ENCODE measurements at regions of chr20 and their contacts with region 1.

Region 1: GRCh38 chr20:17806739-17807441 is 107.1 kb downstream of the BANF2 start:
- DNase-seq: peak in 1 of 2 experiments; percentile 64
- H3K4me3 ChIP-seq: no peak overlapping the region
- H3K27ac ChIP-seq: no peak overlapping the region
- H3K4me1 ChIP-seq: peaks cover 0 to 6% (median 4%) of the 10 kb centered on the region in 4 experiments; a peak in 4 of 7 replicates
- H3K27me3 ChIP-seq: no peaks in the 10 kb centered on the region
- CTCF ChIP-seq: no peak
- EP300 ChIP-seq: no peak
- POLR2A ChIP-seq: no peak
- RAD21 ChIP-seq: peak in 1 of 2 experiments; percentile 17; a peak in 1 of 4 replicates

Region 2: DNA sequence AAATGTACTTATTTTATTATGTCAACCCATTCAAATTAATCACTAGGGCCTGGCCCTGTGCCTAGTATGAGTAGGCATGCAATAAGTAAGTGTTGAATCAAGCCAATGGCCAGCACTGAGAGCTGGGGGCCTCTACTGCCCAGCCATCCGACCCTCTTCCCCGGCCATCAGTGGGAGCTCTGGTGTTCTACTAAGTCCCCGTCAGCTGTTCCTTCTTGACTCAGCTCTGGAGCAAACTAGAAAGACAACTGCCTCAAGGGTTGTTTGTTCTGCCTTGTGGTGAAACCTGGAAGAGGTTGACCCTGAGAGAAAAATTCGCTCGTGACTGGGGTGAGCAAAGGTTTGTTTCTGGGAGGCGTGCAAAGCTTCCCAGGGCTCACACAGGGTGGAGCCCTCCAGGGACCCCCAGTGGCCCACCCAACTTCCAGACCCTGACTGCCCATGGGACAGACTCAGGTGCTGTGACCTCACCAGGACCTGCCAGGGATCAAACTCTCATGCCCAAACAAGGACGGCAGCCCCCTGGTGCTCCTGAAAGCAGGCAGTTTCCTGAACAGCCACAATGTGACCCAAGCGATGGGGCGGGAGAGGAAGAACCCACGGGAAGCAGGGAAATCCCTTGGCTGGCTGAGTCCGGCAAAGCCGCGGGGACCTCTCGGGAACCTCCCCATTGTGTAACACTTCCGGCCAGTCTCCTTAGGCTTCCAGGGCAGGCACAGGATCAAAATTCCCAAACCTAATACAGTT is 56.7 kb before region 1 on chr20:
- CTCF ChIA-PET with region 1: no interaction called
- POLR2A ChIA-PET with region 1: no interaction called
- DNase-seq: no peak
- H3K4me3 ChIP-seq: no peak overlapping the region
- H3K27ac ChIP-seq: no peak overlapping the region
- H3K4me1 ChIP-seq: peaks cover 4 to 13% (median 11%) of the 10 kb centered on the region in 4 experiments
- H3K27me3 ChIP-seq: peaks cover 0 to 2% (median 0%) of the 10 kb centered on the region in 4 experiments; a peak in 2 of 7 replicates
- CTCF ChIP-seq: no peak
- EP300 ChIP-seq: no peak
- POLR2A ChIP-seq: no peak
- RAD21 ChIP-seq: no peak

Region 3: GRCh38 chr20:17796091-17796563 is 10.8 kb before region 1 on chr20:
- CTCF ChIA-PET with region 1: interaction called, 11 read pairs
- POLR2A ChIA-PET with region 1: no interaction called
- DNase-seq: no peak
- H3K4me3 ChIP-seq: no peak overlapping the region
- H3K27ac ChIP-seq: no peak overlapping the region
- H3K4me1 ChIP-seq: no peaks in the 10 kb centered on the region
- H3K27me3 ChIP-seq: no peaks in the 10 kb centered on the region
- CTCF ChIP-seq: no peak
- EP300 ChIP-seq: no peak
- POLR2A ChIP-seq: no peak
- RAD21 ChIP-seq: no peak

Region 4: GRCh38 chr20:17958373-17959256 is 151.7 kb after region 1 on chr20:
- CTCF ChIA-PET with region 1: no interaction called
- POLR2A ChIA-PET with region 1: no interaction called
- DNase-seq: no peak
- H3K4me3 ChIP-seq: no peak overlapping the region
- H3K27ac ChIP-seq: no peak overlapping the region
- H3K4me1 ChIP-seq: peaks cover 0 to 27% (median 6%) of the 10 kb centered on the region in 4 experiments; a peak in 5 of 7 replicates
- H3K27me3 ChIP-seq: no peaks in the 10 kb centered on the region
- CTCF ChIP-seq: no peak
- EP300 ChIP-seq: no peak
- POLR2A ChIP-seq: 0 out of 3 replicates have a peak, but pooled peaks of 1 of the 2 experiments have one; percentile 69
- RAD21 ChIP-seq: no peak

Region 5: DNA sequence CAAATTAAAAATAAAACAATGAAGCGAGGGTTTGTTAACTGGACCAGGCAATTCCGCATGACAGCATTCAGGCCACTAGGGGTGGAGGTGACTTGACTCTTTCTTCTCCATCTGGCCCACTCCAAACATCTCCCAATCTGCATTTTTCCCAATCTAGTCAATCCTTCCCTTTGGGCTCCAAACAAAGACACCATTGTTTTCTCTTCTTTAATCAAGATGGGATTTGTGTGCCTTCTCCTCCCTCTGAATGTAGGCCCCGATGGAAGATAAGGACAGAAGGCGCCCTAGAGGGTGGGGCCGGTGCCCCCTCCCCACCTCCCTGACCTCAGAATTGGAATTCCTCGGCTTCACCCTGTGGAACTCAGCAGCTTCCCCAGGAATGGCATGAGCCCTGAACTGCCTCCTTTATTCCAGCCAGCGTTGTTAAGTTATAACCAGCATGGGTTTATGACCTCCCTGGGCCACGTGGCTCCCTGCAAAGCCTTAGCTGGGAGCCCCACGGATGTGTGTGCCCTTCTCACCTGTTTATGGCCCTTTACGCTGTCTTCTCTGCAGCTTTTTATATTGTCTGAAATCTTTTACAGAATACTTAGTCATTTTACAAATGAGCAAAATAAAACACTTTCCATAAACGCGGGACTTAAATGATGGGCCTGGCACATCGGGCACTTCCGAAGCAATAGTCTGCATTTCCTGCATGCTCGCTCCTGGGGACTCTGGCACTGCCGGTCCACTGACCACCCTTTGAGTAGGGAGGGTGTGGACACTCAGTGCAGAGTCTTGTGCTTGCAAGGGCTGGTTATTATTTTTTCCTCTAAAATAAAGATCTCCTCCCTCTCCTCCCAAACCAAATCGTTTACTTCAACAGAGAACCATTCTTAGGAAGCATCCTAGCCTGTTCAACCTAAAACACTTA is 226.3 kb after region 1 on chr20:
- CTCF ChIA-PET with region 1: no interaction called
- POLR2A ChIA-PET with region 1: no interaction called
- DNase-seq: no peak
- H3K4me3 ChIP-seq: no peak overlapping the region
- H3K27ac ChIP-seq: no peak overlapping the region
- H3K4me1 ChIP-seq: peaks cover 0 to 5% (median under 1%) of the 10 kb centered on the region in 4 experiments; a peak in 3 of 7 replicates
- H3K27me3 ChIP-seq: no peaks in the 10 kb centered on the region
- CTCF ChIP-seq: peak; percentile 23 to 39 (median 32); a peak in 3 of 4 replicates
- EP300 ChIP-seq: no peak
- POLR2A ChIP-seq: no peak
- RAD21 ChIP-seq: peak; percentile 31; a peak in 3 of 4 replicates

Measured in H1 (cell line).